ENCODE measurements at regions of chr19 and their contacts with region 1.

Region 1: DNA sequence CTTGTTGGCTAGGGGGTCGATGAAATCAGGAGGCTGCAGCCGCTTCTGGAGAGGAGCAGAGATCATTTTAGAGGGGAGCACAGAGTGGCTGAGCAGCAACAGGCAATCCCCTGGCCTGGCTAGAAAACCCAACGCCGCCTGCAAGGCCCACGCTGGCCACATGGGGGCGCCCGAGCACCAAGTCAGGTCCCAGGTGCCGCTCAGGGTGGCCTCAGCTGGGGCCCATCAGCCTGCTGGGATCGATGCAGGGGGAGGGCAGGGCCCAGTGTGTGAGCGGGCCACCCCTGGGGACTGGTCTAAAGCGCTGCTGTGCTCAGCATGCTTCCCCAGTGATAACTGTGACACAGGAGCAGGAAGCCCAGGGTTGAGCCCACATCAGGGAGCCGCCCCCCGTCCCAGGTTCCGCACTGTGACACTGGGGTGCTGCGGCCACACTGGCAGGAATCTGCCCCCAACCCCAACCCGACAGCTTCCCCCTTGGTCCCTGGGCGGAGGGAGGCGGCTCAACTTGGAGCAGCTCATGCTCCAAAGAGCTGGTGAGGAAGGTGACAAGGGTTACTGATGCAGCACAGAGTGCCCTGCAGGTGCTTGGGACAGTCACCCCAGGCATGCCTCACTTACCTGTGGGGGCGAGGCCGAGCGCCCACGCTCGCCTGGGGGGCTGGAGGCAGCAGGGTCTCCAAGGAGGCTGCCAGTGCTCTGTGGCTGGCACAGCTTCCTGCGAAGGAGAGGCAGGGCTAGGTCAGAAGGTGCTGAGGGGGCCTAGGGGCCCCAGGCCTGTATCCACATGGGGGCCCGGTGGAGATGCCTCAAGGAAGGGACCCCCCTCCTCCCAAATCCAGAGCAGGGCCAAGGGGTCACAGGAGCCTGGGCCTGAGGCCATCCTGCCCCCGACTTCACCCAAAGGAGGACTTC is 13.3 kb upstream of the ISYNA1 start:
- DNase-seq: peak; percentile 50 to 93
- H3K4me3 ChIP-seq: no peak overlapping the region
- H3K4me1 ChIP-seq: no peaks in the 10 kb centered on the region
- H3K27me3 ChIP-seq: no peaks in the 10 kb centered on the region

Region 2: DNA sequence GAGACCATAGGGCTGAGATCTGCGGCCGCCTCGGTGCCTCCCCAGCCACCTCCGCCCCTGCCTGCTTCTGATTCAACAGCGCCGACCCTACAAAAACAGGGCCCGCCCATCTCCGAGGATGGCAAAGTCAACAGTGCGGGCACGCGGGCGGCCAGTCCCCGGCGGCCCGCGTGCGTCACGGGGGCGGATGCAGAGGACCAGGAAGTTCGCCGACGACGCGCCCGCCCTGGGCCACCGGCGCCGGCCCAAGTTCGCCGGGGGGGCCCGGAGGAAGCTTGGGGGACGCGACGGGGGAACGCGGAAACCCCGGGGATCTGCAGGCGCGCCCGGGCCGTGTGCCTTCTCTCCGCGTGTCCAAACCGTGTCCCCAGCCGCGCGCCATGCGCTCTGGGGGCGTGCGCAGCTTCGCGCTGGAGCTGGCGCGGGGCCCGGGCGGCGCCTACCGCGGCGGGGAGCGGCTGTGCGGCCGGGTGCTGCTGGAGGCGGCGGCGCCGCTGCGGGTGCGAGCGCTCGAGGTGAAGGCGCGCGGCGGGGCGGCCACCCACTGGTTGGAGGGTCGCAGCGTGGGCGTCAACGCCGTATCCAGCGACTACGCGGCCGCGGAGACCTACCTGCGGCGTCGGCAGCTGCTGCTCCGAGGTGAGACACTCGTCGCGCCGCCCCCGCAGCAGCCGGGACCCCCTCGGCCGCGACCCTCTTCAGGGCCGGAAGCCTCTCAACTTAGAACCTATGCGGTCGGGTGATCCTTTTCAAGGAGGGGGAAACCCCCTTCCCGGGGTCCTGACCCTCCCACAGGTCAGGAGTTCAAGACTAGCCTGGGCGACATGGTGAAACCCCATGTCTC is 450.0 kb before region 1 on chr19:
- in situ Hi-C with region 1: no loop called
- DNase-seq: peak; percentile 34 to 86
- H3K4me3 ChIP-seq: peak overlapping the region; percentile 54
- H3K4me1 ChIP-seq: peaks cover 6% of the 10 kb centered on the region; the same call in 1 of the 2 replicates
- H3K27me3 ChIP-seq: no peaks in the 10 kb centered on the region

Region 3: GRCh38 chr19:18856385-18857126 is 405.4 kb after region 1 on chr19:
- in situ Hi-C with region 1: loop called (anchors 10 kb)
- DNase-seq: peak in 1 of 2 experiments; percentile 50
- H3K4me3 ChIP-seq: no peak overlapping the region
- H3K4me1 ChIP-seq: no peaks in the 10 kb centered on the region
- H3K27me3 ChIP-seq: no peaks in the 10 kb centered on the region

Region 4: GRCh38 chr19:18915639-18916038 is 464.5 kb after region 1 on chr19:
- in situ Hi-C with region 1: no loop called
- DNase-seq: peak in 1 of 2 experiments; percentile 44
- H3K4me3 ChIP-seq: no peak overlapping the region
- H3K4me1 ChIP-seq: peaks cover 3% of the 10 kb centered on the region
- H3K27me3 ChIP-seq: no peaks in the 10 kb centered on the region

Region 5: DNA sequence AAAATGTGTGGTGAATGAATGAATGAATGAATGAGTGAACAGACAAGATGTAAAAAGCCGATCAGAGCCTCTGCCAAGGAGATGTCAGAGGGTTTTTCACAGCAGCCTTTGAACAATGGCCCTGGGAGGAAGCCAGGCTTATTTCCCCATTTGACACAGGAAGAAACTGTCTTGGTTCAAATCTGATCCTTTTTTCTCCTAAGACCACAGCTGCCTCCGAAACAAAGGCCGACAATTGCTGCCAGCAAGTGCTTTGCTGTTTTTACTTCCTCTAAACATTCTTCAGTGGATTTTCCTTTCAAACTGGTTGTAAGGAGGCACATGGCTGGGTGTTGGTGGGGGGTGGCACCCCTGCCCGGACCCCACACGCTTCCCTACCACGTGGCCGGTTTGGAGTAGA is 534.1 kb after region 1 on chr19:
- in situ Hi-C with region 1: loop called (anchors 10 kb)
- DNase-seq: no peak
- H3K4me3 ChIP-seq: no peak overlapping the region
- H3K4me1 ChIP-seq: no peaks in the 10 kb centered on the region; the same call in 1 of the 2 replicates
- H3K27me3 ChIP-seq: peaks cover 21% of the 10 kb centered on the region; the same call in 1 of the 2 replicates

Measured in HAP-1 (cell line).